ENCODE measurements at regions of chr4 and their contacts with region 1.

Region 1: GRCh38 chr4:99462875-99463464 is 27.8 kb upstream of the ADH7 start:
- DNase-seq: peak in 8 of 9 donors; percentile 16 to 62 (median 44)
- ATAC-seq: peak; percentile 82
- H3K4me3 ChIP-seq: no peak overlapping the region
- H3K4me3 Mint-ChIP-seq: no peak overlapping the region
- H3K27ac ChIP-seq: no peak overlapping the region
- H3K27ac Mint-ChIP-seq: no peak overlapping the region
- H3K4me1 ChIP-seq: no peaks in the 10 kb centered on the region
- H3K4me1 Mint-ChIP-seq: no peaks in the 10 kb centered on the region
- H3K27me3 ChIP-seq: no peaks in the 10 kb centered on the region
- H3K27me3 Mint-ChIP-seq: peaks cover 0 to 35% (median 8%) of the 10 kb centered on the region in 5 donors

Region 2: DNA sequence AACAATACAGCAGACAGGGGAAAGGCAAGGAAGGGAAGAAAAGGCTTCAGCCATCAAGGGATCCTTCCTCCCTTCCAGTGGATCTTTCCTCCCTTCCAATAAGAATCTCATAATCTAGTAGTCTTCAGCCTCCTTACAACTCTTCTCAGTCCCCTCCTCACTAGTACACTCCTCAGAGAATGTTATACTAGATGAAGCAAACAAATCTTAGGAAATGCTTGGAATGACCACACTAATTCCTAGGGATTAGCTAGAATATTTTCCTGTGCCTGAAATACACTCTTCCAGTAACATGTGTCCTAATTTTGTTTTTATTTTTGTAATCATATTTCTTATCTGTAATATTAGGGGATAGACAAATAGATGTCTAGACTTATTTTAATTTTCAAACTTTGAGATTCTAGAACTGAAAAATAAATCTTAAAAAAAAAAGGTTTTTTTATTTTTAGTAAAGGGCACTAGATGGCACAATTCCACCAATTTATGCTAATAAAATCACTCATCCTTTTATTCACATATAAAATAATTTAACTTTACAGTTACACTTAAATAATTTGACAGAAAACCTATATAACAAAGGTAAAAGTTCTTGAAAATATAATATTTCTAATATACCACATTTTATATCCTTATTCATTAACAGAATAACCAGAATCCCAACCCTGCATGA is 1312.7 kb before region 1 on chr4:
- CTCF ChIA-PET with region 1: no interaction called
- POLR2A ChIA-PET with region 1: no interaction called
- intact Hi-C with region 1: loop called in 1 of 2 experiments (anchors 1 kb)
- DNase-seq: peak in 1 of 9 donors; percentile 11
- ATAC-seq: no peak
- H3K4me3 ChIP-seq: no peak overlapping the region
- H3K4me3 Mint-ChIP-seq: no peak overlapping the region
- H3K27ac ChIP-seq: no peak overlapping the region
- H3K27ac Mint-ChIP-seq: peak overlapping the region in 2 of 9 donors; percentile 5 to 68
- H3K4me1 ChIP-seq: no peaks in the 10 kb centered on the region
- H3K4me1 Mint-ChIP-seq: peaks cover 0 to 14% (median 5%) of the 10 kb centered on the region in 7 donors
- H3K27me3 ChIP-seq: no peaks in the 10 kb centered on the region
- H3K27me3 Mint-ChIP-seq: peaks cover 0 to 11% (median 0%) of the 10 kb centered on the region in 5 donors

Region 3: DNA sequence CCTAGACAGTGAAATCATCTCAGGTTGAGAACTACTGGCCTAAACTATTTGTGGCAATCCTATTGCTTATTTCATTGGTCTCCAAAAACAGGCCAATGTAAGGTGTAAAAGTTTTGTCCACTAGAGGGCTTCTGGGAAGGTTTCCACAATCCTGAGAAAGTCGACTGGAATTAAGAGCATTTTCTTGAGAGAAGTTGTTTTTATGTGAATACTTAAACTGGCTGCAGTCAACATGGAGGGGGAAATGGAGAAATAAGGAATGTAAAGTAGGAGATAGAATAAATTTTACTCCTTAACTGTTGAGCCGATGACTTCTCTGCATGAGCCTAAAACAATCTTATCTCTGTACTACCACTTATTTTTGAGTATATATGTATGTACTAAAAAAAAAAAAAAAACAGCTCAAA is 523.1 kb before region 1 on chr4:
- CTCF ChIA-PET with region 1: no interaction called
- POLR2A ChIA-PET with region 1: no interaction called
- intact Hi-C with region 1: loop called in 1 of 2 experiments (anchors 1 kb)
- DNase-seq: peak in 5 of 9 donors; percentile 9 to 26 (median 17)
- ATAC-seq: peak; percentile 63
- H3K4me3 ChIP-seq: no peak overlapping the region
- H3K4me3 Mint-ChIP-seq: no peak overlapping the region
- H3K27ac ChIP-seq: no peak overlapping the region
- H3K27ac Mint-ChIP-seq: no peak overlapping the region
- H3K4me1 ChIP-seq: no peaks in the 10 kb centered on the region
- H3K4me1 Mint-ChIP-seq: peaks cover 4 to 15% (median 9%) of the 10 kb centered on the region in 7 donors
- H3K27me3 ChIP-seq: no peaks in the 10 kb centered on the region
- H3K27me3 Mint-ChIP-seq: no peaks in the 10 kb centered on the region

Region 4: GRCh38 chr4:99504804-99505569 is 42.0 kb after region 1 on chr4:
- CTCF ChIA-PET with region 1: no interaction called
- POLR2A ChIA-PET with region 1: no interaction called
- intact Hi-C with region 1: loop called in 1 of 2 experiments (anchors 1 kb)
- DNase-seq: no peak
- ATAC-seq: no peak
- H3K4me3 ChIP-seq: no peak overlapping the region
- H3K4me3 Mint-ChIP-seq: peak overlapping the region in 3 of 10 donors; percentile 14 to 76 (median 56)
- H3K27ac ChIP-seq: no peak overlapping the region
- H3K27ac Mint-ChIP-seq: peak overlapping the region in 8 of 9 donors; percentile 14 to 91 (median 40)
- H3K4me1 ChIP-seq: peaks cover 8 to 33% of the 10 kb centered on the region in 2 donors
- H3K4me1 Mint-ChIP-seq: peaks cover 31 to 63% (median 57%) of the 10 kb centered on the region in 7 donors
- H3K27me3 ChIP-seq: no peaks in the 10 kb centered on the region
- H3K27me3 Mint-ChIP-seq: peaks cover 0 to 2% (median 0%) of the 10 kb centered on the region in 5 donors

Region 5: GRCh38 chr4:99885063-99885664 is 422.2 kb after region 1 on chr4:
- CTCF ChIA-PET with region 1: interaction called, 3 read pairs
- POLR2A ChIA-PET with region 1: interaction called, 3 read pairs
- intact Hi-C with region 1: loop called in 1 of 2 experiments (anchors 5 kb)
- DNase-seq: peak in 7 of 9 donors; percentile 34 to 64 (median 54)
- ATAC-seq: peak; percentile 72
- H3K4me3 ChIP-seq: no peak overlapping the region
- H3K4me3 Mint-ChIP-seq: no peak overlapping the region
- H3K27ac ChIP-seq: no peak overlapping the region
- H3K27ac Mint-ChIP-seq: no peak overlapping the region
- H3K4me1 ChIP-seq: peaks cover 0 to 2% of the 10 kb centered on the region in 2 donors
- H3K4me1 Mint-ChIP-seq: peaks cover 0 to 19% (median 13%) of the 10 kb centered on the region in 7 donors
- H3K27me3 ChIP-seq: no peaks in the 10 kb centered on the region
- H3K27me3 Mint-ChIP-seq: no peaks in the 10 kb centered on the region